ENCODE measurements at regions of chr4 and their contacts with region 1.

Region 1: DNA sequence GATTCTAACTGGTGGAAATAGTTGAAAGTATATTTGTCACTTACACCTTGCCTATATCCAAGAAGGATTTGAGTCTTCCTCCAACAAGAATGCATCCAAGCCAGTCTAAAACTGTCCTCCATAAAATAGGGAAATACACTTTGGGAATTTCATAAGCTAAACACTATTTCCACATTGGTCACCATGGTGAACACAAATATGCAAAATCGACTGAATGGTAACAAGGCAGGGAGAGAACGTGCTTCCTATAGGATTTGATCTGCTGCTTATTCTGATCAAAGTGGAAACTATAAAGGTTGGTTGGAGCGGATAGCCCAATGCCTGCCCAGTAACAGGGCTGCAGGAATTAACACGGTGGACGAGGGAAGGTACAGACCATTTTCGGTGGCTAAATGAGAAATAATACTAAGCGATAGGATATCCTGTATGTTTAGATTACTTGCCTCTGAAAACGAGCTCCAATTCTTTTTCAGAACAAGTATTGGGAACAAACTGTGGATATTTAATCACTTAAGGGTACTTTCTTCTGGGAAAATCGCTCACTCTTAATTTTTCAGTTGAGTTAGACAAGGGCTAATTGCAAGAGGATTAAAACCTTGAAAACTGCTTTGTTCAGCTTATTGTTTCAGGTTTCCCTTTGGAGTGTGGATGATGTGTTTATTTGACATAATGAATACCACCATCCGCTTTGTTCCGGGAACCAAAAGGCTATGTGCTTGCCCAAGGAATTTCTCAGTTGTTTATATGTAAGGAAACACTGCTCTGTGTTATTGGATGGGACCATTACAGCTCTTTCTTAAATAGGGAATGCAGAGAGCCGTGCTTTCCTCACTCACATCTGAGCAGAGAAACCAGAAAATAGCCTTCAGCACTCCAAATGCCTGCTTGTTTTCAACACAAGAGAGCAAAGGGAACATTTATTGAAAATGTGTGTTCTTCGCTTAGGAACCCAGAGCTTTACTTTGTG is 194.4 kb downstream of the CBR4 start:
- DNase-seq: no peak
- H3K4me3 ChIP-seq: no peak overlapping the region
- H3K27me3 ChIP-seq: no peaks in the 10 kb centered on the region
- CTCF ChIP-seq: no peak

Region 2: GRCh38 chr4:168304744-168305459 is 510.8 kb before region 1 on chr4:
- CTCF ChIA-PET with region 1: no interaction called
- POLR2A ChIA-PET with region 1: no interaction called
- DNase-seq: peak; percentile 44
- H3K4me3 ChIP-seq: no peak overlapping the region
- H3K27me3 ChIP-seq: no peaks in the 10 kb centered on the region
- CTCF ChIP-seq: no peak

Region 3: GRCh38 chr4:168758351-168758876 is 57.2 kb before region 1 on chr4:
- CTCF ChIA-PET with region 1: no interaction called
- POLR2A ChIA-PET with region 1: no interaction called
- DNase-seq: peak; percentile 92
- H3K4me3 ChIP-seq: no peak overlapping the region
- H3K27me3 ChIP-seq: no peaks in the 10 kb centered on the region
- CTCF ChIP-seq: no peak

Region 4: DNA sequence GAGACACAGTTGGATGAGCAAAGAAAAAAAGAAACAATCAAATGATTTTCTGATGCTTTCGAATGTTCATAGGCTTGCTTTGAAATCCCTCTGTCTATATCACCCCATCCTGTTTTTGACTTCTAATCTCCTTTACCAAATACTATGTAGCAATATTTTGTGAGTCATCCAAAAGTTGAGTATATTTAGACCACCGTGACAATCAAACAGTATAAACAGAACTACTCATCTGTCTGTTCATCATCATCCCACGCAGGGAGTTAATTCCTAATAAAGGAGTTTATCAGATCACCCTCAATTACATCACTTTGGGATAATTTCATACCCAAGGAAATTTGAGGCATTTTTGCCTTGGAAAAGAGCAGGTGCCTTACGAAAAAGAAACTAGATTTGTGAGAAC is 18.5 kb before region 1 on chr4:
- CTCF ChIA-PET with region 1: no interaction called
- POLR2A ChIA-PET with region 1: no interaction called
- DNase-seq: peak; percentile 42
- H3K4me3 ChIP-seq: no peak overlapping the region
- H3K27me3 ChIP-seq: no peaks in the 10 kb centered on the region
- CTCF ChIP-seq: no peak

Region 5: GRCh38 chr4:168831919-168832762 is 16.5 kb after region 1 on chr4:
- CTCF ChIA-PET with region 1: interaction called, 14 read pairs
- POLR2A ChIA-PET with region 1: interaction called, 16 read pairs
- DNase-seq: no peak
- H3K4me3 ChIP-seq: peak overlapping the region; percentile 95
- H3K27me3 ChIP-seq: no peaks in the 10 kb centered on the region
- CTCF ChIP-seq: no peak

Region 6: GRCh38 chr4:169010125-169011023 is 194.7 kb after region 1 on chr4 and contains the start of gene CBR4:
- CTCF ChIA-PET with region 1: no interaction called
- POLR2A ChIA-PET with region 1: interaction called, 16 read pairs
- DNase-seq: peak; percentile 93
- H3K4me3 ChIP-seq: peak within 1 kb of the TSS; percentile 82
- H3K27me3 ChIP-seq: no peaks in the 10 kb centered on the region
- CTCF ChIP-seq: peak; percentile 44
- polyA plus RNA-seq, gene CBR4: 1.7 and 3.1 TPM in 2 replicates

Region 7: DNA sequence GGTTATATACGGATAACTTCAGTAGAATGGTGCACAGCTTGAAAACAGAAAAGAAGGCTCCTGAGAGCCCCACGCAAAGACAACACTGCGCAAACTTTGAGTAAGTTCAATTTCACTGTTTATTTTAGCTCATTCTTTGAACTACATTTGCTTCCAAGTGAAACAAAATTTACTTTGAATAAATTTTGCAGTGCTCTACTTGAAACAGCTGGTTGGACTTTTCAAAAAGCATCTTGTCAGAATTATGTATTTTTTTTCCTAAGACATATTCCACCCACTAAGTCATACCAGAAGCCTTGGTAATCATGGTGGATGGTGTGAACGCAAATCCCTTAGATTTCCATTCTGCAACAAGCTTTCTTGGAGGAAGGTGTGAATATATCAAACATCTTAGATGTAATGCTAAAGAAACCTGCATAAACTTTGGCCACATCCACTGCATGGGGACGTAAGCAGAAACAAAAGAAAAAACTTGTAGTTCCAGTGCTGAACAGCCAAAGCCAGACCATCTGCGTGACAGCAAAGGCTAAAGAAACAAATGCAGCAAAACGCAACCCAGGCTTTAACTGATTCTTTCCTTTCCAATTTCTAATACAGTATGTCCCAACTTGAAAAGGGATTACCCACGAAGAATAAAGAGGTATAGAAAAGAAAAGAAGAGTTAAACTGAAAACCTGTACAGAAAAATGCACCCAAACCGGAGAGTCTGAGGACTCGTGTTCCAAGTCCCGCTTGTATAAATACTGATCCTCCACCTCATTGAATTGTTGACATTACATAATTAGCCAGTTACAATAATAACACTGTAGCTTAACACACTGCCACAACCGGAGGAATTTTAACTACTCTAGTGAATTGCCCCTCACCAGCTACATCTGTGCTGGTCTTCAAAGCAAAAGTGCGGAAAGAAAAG is 364.2 kb after region 1 on chr4:
- CTCF ChIA-PET with region 1: no interaction called
- POLR2A ChIA-PET with region 1: no interaction called
- DNase-seq: no peak
- H3K4me3 ChIP-seq: no peak overlapping the region
- H3K27me3 ChIP-seq: no peaks in the 10 kb centered on the region
- CTCF ChIP-seq: no peak